ENCODE measurements at regions of chr2 and their contacts with region 1.

Region 1: GRCh38 chr2:191811807-191812602 is 34.9 kb downstream of the CAVIN2 start:
- DNase-seq: no peak
- H3K4me3 ChIP-seq: no peak overlapping the region
- H3K27ac ChIP-seq: no peak overlapping the region
- H3K4me1 ChIP-seq: no peaks in the 10 kb centered on the region
- H3K27me3 ChIP-seq: no peaks in the 10 kb centered on the region
- CTCF ChIP-seq: peak; percentile 70 to 84 (median 77)

Region 2: DNA sequence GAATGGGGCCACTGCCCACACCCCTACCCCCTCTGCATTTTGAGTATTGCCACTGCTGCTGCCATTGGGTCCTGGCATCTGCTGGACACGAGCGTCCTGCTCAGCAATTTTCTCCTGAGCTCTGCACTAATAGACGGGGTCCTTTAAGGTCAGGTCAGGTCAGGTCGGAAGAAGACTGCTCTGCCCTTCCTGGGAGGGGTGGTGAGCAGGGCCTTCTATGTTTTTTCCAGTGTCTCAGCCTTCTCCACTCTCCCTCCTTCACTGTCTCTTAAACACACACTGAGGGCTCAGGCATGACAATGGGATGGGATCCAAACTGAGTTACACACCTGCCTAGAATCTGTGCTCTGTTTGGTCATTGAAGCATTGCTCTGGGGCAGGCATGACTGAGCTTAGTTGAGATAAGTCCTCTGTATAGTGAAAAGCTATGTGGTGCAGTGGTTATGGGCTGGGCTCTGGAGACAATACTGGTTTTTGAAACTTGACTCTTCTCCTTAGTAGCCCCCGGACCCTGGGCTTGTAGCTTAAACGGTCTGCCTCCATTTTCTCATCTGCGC is 556.2 kb before region 1 on chr2:
- dilution Hi-C with region 1: no loop called
- DNase-seq: no peak
- H3K4me3 ChIP-seq: no peak overlapping the region
- H3K27ac ChIP-seq: no peak overlapping the region
- H3K4me1 ChIP-seq: peaks cover 24% of the 10 kb centered on the region
- H3K27me3 ChIP-seq: no peaks in the 10 kb centered on the region
- CTCF ChIP-seq: no peak

Region 3: GRCh38 chr2:191555092-191555742 is 256.8 kb before region 1 on chr2:
- dilution Hi-C with region 1: loop called (anchors 25 kb)
- DNase-seq: peak; percentile 41
- H3K4me3 ChIP-seq: peak overlapping the region in 2 of 3 experiments; percentile 42 to 60
- H3K27ac ChIP-seq: peak overlapping the region; percentile 40
- H3K4me1 ChIP-seq: peaks cover 24% of the 10 kb centered on the region
- H3K27me3 ChIP-seq: no peaks in the 10 kb centered on the region
- CTCF ChIP-seq: peak; percentile 72 to 90 (median 79)

Region 4: DNA sequence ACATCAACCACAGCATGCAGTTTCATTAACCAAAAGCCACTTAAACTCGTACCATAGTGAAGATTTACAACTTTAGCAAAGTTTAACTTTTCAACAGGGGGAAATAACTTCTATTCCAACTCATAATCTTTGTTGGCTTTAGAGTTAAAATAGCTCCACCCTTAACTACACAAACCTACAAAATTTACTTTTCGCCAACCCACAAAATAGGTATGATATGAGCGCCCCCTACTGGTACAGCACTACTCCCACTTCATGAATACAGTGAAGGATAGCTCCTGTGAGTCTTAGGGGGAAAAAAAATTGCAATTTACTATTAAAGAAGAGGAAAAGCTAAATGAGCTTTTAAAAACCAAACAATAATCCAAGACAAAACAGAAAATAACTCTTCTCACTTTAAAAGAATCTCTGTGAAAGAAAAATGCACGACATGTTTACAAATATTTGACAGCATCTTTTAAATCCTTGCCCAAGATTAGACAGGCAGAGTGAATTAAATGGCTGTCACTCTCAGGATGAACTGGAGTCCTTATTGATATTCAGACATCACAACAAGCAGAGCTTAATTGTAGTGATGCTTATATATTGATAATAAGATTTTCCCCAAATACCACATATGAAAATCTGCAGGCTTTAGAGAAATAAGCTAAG is 350.5 kb after region 1 on chr2:
- dilution Hi-C with region 1: loop called (anchors 25 kb)
- DNase-seq: no peak
- H3K4me3 ChIP-seq: no peak overlapping the region
- H3K27ac ChIP-seq: no peak overlapping the region
- H3K4me1 ChIP-seq: no peaks in the 10 kb centered on the region
- H3K27me3 ChIP-seq: no peaks in the 10 kb centered on the region
- CTCF ChIP-seq: peak; percentile 57 to 81 (median 72)

Measured in keratinocyte (primary cell).